ENCODE measurements at regions of chr14 and their contacts with region 1.

Region 1: GRCh38 chr14:22099942-22100763 is 426.5 kb upstream of the OR4E1 start:
- DNase-seq: peak; percentile 78
- ATAC-seq: peak; percentile 55
- H3K4me3 Mint-ChIP-seq: no peak overlapping the region
- H3K27ac Mint-ChIP-seq: peak overlapping the region; percentile 44
- H3K4me1 Mint-ChIP-seq: peaks cover 59% of the 10 kb centered on the region
- H3K27me3 Mint-ChIP-seq: no peaks in the 10 kb centered on the region

Region 2: DNA sequence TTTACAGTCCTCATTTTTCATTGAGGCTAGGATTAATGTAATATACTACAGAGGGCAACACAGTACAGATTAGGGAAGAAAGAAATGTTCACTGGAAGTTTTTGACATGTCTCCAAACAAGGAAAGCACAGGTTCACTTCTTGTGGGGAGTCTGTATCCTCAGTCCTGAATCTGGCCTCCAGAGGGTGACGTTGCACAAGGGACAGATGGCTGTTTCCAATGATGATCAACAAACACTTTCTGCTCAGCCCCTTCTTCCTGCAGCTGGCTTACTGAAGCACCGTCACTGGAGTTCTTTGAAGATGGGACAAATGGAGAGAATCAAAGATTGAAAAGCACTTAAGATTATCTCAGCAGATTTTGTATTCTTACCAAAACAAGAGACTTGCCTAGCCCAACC is 303.2 kb before region 1 on chr14:
- CTCF ChIA-PET with region 1: no interaction called
- POLR2A ChIA-PET with region 1: no interaction called
- DNase-seq: no peak
- ATAC-seq: peak; percentile 39
- H3K4me3 Mint-ChIP-seq: peak overlapping the region; percentile 25
- H3K27ac Mint-ChIP-seq: no peak overlapping the region
- H3K4me1 Mint-ChIP-seq: peaks cover 2% of the 10 kb centered on the region
- H3K27me3 Mint-ChIP-seq: peaks cover 13% of the 10 kb centered on the region

Region 3: DNA sequence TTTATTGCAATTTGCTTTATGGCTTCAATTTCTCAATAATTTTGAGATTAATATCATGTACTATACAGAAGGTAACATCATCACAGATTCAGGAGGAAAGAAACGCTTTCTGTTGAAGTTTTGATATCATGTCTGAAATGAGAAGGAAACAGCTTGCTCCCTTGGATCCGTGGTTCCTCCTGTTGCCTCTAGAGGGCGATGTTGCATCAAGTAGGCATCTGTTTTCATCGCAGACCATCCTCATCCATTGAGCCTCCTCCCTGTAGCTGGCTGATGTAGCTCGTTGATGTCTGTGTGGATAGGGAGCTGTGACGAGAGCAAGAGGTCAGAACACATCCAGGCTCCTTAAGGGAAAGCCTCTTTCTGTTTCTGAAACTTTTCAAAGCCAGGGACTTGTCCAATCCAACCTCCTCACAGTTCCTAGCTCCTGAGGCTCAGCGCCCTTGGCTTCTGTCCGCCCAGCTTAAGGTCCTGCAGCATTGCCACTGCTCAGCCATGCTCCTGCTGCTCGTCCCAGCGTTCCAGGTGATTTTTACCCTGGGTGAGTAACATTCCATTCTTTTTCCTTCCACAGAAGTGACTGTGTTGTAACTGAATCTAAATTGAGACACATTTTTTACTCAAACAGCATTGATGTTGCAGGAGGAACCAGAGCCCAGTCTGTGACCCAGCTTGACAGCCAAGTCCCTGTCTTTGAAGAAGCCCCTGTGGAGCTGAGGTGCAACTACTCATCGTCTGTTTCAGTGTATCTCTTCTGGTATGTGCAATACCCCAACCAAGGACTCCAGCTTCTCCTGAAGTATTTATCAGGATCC is 121.8 kb before region 1 on chr14:
- CTCF ChIA-PET with region 1: interaction called, 12 read pairs
- POLR2A ChIA-PET with region 1: no interaction called
- DNase-seq: peak; percentile 77
- ATAC-seq: peak; percentile 84
- H3K4me3 Mint-ChIP-seq: peak overlapping the region; percentile 69
- H3K27ac Mint-ChIP-seq: peak overlapping the region; percentile 53
- H3K4me1 Mint-ChIP-seq: peaks cover 23% of the 10 kb centered on the region
- H3K27me3 Mint-ChIP-seq: peaks cover 27% of the 10 kb centered on the region

Region 4: GRCh38 chr14:22039938-22040775 is 60.0 kb before region 1 on chr14:
- CTCF ChIA-PET with region 1: interaction called, 52 read pairs
- POLR2A ChIA-PET with region 1: no interaction called
- DNase-seq: peak; percentile 71
- ATAC-seq: peak; percentile 91
- H3K4me3 Mint-ChIP-seq: peak overlapping the region; percentile 76
- H3K27ac Mint-ChIP-seq: peak overlapping the region; percentile 81
- H3K4me1 Mint-ChIP-seq: peaks cover 19% of the 10 kb centered on the region
- H3K27me3 Mint-ChIP-seq: peaks cover 6% of the 10 kb centered on the region

Region 5: DNA sequence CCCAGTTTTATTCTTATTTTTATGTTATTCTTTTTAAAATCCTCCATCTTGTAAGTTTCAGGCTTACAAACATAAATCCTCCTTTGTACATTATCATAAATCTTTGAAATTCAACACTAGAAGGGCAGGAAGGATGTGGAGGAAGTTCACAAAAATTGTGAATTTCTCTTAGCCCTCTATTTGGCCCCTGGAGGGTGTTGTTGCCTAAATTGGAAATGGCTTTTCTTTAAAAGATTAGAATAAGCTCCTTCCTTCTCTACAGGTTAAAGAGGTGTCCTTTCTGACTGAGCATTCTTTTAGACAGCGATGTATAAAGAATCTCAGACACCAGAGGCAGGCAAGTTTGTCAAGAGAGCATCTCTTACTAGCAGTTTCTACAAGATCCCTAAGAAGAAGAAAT is 34.8 kb before region 1 on chr14:
- CTCF ChIA-PET with region 1: interaction called, 27 read pairs
- POLR2A ChIA-PET with region 1: interaction called, 7 read pairs
- DNase-seq: no peak
- ATAC-seq: no peak
- H3K4me3 Mint-ChIP-seq: peak overlapping the region; percentile 42
- H3K27ac Mint-ChIP-seq: peak overlapping the region; percentile 69
- H3K4me1 Mint-ChIP-seq: peaks cover 40% of the 10 kb centered on the region
- H3K27me3 Mint-ChIP-seq: no peaks in the 10 kb centered on the region

Region 6: GRCh38 chr14:22084393-22085281 is 15.5 kb before region 1 on chr14:
- CTCF ChIA-PET with region 1: interaction called, 48 read pairs
- POLR2A ChIA-PET with region 1: interaction called, 7 read pairs
- DNase-seq: peak; percentile 53
- ATAC-seq: peak; percentile 49
- H3K4me3 Mint-ChIP-seq: peak overlapping the region; percentile 45
- H3K27ac Mint-ChIP-seq: peak overlapping the region; percentile 72
- H3K4me1 Mint-ChIP-seq: peaks cover 34% of the 10 kb centered on the region
- H3K27me3 Mint-ChIP-seq: no peaks in the 10 kb centered on the region

Region 7: DNA sequence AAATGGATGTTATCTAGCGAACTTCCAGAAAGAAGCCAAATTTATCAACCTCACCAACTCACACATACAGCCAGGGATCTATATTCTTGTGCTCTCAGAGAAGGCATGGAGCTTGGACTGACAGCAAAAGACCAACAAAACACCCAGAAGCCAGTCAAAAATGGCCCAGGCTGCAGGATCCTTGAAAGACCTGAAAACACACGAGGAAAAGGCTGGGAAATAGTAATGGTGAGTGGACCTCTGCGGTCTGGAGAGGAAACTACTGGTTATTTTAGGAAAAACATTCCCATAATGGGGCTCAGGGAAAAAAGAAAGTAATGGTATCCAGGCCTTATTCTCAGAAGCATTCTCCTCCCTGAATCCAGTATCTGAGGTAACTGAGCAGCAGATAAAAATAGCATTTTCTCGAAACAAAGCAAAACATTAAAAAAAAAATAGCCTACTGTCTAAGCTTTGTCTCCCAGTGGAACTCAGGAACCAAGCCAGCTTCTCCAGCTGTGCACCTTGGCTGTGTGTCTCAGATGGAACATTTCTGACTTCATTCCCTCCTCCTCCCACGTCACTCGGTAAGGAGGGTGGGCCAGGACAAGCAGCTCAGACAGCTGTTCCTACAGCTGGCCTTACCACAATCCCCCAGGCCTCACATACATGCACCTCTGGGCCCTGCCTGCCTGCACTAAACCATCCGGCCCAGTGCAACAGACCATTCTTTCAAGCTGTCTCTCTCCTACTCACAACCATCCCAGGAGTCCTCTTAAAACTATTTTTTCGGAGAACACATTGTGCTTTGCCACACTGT is 239.0 kb after region 1 on chr14:
- CTCF ChIA-PET with region 1: no interaction called
- POLR2A ChIA-PET with region 1: no interaction called
- DNase-seq: no peak
- ATAC-seq: no peak
- H3K4me3 Mint-ChIP-seq: no peak overlapping the region
- H3K27ac Mint-ChIP-seq: no peak overlapping the region
- H3K4me1 Mint-ChIP-seq: no peaks in the 10 kb centered on the region
- H3K27me3 Mint-ChIP-seq: no peaks in the 10 kb centered on the region